K562 (cell line): ENCODE measurements at regions of chr18 and their contacts with region 1.

Region 1: GRCh38 chr18:22279741-22280452 is 110.5 kb downstream of the GATA6 start:
- DNase-seq: no peak
- ATAC-seq: no peak
- H3K4me3 ChIP-seq: no peak overlapping the region
- H3K27ac ChIP-seq: no peak overlapping the region
- H3K4me1 ChIP-seq: no peaks in the 10 kb centered on the region
- H3K27me3 ChIP-seq: peaks cover 12 to 21% of the 10 kb centered on the region in 2 experiments; a peak in 4 of 5 replicates
- CTCF ChIP-seq: no peak
- EP300 ChIP-seq: no peak
- POLR2A ChIP-seq: no peak
- RAD21 ChIP-seq: no peak

Region 2: DNA sequence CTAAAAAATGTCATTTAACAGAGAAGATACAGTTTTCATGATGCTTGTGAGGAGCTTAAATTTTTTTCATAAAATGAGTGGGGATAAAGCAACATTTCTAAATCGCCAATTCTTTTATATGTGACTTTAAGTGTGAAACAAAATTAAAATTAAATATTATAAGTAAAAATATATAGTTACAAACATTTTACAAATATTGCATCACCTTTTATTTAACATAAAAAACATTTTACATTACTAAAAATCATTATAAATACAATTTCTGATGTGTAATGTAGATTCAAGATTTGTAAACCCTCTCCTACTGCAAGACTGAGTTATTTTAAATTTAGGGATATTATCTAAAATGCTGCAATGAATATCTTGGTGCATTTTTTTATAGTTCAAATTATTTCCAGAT is 154.9 kb before region 1 on chr18:
- CTCF ChIA-PET with region 1: no interaction called
- POLR2A ChIA-PET with region 1: no interaction called
- in situ Hi-C with region 1: no loop called
- intact Hi-C with region 1: no loop called
- DNase-seq: no peak
- ATAC-seq: no peak
- H3K4me3 ChIP-seq: no peak overlapping the region
- H3K27ac ChIP-seq: no peak overlapping the region
- H3K4me1 ChIP-seq: no peaks in the 10 kb centered on the region
- H3K27me3 ChIP-seq: peaks cover 2 to 6% of the 10 kb centered on the region in 2 experiments; a peak in 2 of 5 replicates
- CTCF ChIP-seq: no peak
- EP300 ChIP-seq: no peak
- POLR2A ChIP-seq: no peak
- RAD21 ChIP-seq: no peak

Region 3: GRCh38 chr18:22214731-22215528 is 65.0 kb before region 1 on chr18:
- CTCF ChIA-PET with region 1: no interaction called
- POLR2A ChIA-PET with region 1: no interaction called
- in situ Hi-C with region 1: no loop called
- intact Hi-C with region 1: loop called (anchors 10 kb)
- DNase-seq: no peak
- ATAC-seq: no peak
- H3K4me3 ChIP-seq: no peak overlapping the region
- H3K27ac ChIP-seq: no peak overlapping the region
- H3K4me1 ChIP-seq: no peaks in the 10 kb centered on the region
- H3K27me3 ChIP-seq: peaks cover 16 to 28% of the 10 kb centered on the region in 2 experiments; a peak in 4 of 5 replicates
- CTCF ChIP-seq: no peak
- EP300 ChIP-seq: no peak
- POLR2A ChIP-seq: no peak
- RAD21 ChIP-seq: no peak